PC-9 (cell line): ENCODE measurements at regions of chr6 and their contacts with region 1.

Region 1: DNA sequence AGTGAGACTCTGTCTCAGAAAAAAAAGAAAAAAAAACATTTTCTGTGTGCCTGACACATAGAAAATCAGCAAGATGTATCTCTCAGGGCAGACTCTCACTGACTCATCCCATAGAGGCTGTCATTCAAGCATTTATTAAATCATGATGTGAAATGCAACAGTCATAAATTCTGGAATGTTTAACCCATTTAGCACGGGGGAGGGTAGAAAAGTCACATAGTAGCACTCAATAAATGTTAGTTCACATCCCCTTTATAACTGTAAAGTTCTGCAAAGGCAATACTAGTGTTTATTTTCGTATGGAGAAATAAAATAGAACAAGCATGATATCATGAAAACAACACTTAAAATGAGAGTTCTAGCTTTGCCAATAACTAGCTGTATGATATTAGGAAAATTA is 15.5 kb upstream of the CARMIL1 start:
- DNase-seq: no peak
- H3K4me3 ChIP-seq: no peak overlapping the region
- H3K27ac ChIP-seq: no peak overlapping the region
- H3K4me1 ChIP-seq: no peaks in the 10 kb centered on the region
- H3K27me3 ChIP-seq: no peaks in the 10 kb centered on the region
- CTCF ChIP-seq: no peak

Region 2: GRCh38 chr6:25278914-25279747 is 15.5 kb after region 1 on chr6 and contains the start of gene CARMIL1:
- CTCF ChIA-PET with region 1: interaction called, 12 read pairs
- POLR2A ChIA-PET with region 1: interaction called, 5 read pairs
- intact Hi-C with region 1: no loop called
- DNase-seq: peak; percentile 78 to 94
- H3K4me3 ChIP-seq: peak within 1 kb of the TSS; percentile 96
- H3K27ac ChIP-seq: peak within 1 kb of the TSS; percentile 62
- H3K4me1 ChIP-seq: peaks cover 21% of the 10 kb centered on the region
- H3K27me3 ChIP-seq: no peaks in the 10 kb centered on the region
- CTCF ChIP-seq: peak; percentile 66
- total RNA-seq, gene CARMIL1: 25.7 and 33.1 TPM in 2 replicates

Region 3: DNA sequence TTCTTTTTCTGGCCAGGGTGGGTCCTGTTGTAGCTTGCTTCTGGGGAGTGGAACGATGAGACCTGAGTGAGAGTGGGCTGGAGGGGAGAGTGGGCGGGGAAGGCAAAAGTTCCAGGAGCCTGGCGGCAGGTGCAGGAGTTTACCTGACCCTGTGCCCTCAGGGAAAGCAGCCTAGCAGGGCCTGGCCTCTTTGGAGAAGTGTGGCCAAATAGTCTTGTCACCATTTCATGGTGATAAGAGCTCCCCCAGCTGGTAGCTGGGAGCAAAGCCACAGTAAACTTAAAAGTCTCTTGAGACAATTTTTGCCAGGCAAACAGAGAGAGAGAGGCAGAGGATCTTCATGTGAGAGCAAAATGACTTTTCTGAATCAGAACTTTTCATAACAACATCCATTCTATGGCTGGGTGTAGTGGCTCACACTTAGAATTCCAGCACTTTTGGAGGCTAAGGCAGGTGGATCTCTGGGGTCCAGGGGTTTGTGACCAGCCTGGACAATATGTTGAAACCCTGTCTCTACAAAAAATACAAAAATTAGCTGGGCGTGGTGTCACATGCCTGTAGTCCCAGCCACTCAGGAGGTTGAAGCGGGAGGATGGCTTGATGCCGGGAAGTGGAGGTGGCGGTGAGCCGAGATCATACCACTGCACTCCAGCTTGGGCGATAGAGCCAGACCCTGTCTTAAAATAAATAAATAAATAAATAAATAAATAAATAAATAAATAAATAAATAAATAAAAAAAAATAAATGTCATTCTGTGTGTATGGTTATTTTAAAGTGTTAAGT is 226.6 kb after region 1 on chr6:
- CTCF ChIA-PET with region 1: interaction called, 26 read pairs
- POLR2A ChIA-PET with region 1: no interaction called
- intact Hi-C with region 1: loop called (anchors 1 kb)
- DNase-seq: peak; percentile 68 to 73
- H3K4me3 ChIP-seq: no peak overlapping the region
- H3K27ac ChIP-seq: no peak overlapping the region
- H3K4me1 ChIP-seq: peaks cover 4% of the 10 kb centered on the region
- H3K27me3 ChIP-seq: no peaks in the 10 kb centered on the region
- CTCF ChIP-seq: peak; percentile 85

Region 4: GRCh38 chr6:25556516-25556915 is 292.9 kb after region 1 on chr6:
- CTCF ChIA-PET with region 1: interaction called, 5 read pairs
- POLR2A ChIA-PET with region 1: no interaction called
- intact Hi-C with region 1: loop called (anchors 1 kb)
- DNase-seq: peak in 1 of 2 experiments; percentile 70
- H3K4me3 ChIP-seq: no peak overlapping the region
- H3K27ac ChIP-seq: no peak overlapping the region
- H3K4me1 ChIP-seq: 0 out of 2 replicates have a peak, but pooled peaks cover 4% of the 10 kb centered on the region
- H3K27me3 ChIP-seq: no peaks in the 10 kb centered on the region
- CTCF ChIP-seq: peak; percentile 88

Region 5: DNA sequence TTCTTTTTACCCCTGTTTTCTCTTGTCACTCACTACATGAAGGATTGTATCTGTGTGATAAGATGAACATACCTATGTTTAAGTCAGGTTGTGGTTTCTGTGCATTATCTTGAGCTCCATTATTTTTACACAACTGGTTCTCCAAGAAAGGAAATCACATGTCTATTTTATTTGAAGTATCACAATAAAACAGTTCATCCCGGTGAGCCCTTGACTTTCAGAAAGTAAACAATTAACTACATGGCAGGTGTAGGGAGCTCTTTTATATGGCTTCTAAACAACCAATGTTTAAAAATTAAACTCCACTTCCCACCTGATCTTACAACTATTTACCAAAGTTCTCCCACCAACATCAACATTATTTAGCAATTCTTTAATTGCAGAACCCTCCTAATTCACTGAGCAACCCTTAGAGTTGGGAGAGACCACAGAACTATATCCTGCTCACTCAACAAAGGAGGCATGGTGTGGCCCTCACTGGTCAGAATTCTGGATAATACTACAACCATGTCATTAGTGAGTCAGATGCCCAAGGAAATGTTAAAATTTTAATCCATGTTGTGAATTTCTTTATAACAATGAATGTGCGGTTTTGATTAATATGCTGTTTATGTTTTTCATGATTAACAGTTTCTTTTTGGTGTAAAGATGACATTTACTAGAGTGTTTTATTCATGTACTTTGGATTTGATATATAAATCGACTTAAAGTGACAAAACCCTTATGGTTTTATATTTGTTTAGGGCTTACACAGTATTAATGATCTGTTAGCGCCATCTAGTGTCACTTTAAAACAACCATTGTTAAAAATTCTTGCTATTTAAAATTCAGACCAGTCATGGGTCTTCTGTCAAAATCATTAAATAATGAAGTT is 338.4 kb after region 1 on chr6:
- CTCF ChIA-PET with region 1: no interaction called
- POLR2A ChIA-PET with region 1: no interaction called
- intact Hi-C with region 1: loop called (anchors 5 kb)
- DNase-seq: peak in 1 of 2 experiments; percentile 43
- H3K4me3 ChIP-seq: no peak overlapping the region
- H3K27ac ChIP-seq: no peak overlapping the region
- H3K4me1 ChIP-seq: no peaks in the 10 kb centered on the region
- H3K27me3 ChIP-seq: no peaks in the 10 kb centered on the region
- CTCF ChIP-seq: peak; percentile 85

Region 6: DNA sequence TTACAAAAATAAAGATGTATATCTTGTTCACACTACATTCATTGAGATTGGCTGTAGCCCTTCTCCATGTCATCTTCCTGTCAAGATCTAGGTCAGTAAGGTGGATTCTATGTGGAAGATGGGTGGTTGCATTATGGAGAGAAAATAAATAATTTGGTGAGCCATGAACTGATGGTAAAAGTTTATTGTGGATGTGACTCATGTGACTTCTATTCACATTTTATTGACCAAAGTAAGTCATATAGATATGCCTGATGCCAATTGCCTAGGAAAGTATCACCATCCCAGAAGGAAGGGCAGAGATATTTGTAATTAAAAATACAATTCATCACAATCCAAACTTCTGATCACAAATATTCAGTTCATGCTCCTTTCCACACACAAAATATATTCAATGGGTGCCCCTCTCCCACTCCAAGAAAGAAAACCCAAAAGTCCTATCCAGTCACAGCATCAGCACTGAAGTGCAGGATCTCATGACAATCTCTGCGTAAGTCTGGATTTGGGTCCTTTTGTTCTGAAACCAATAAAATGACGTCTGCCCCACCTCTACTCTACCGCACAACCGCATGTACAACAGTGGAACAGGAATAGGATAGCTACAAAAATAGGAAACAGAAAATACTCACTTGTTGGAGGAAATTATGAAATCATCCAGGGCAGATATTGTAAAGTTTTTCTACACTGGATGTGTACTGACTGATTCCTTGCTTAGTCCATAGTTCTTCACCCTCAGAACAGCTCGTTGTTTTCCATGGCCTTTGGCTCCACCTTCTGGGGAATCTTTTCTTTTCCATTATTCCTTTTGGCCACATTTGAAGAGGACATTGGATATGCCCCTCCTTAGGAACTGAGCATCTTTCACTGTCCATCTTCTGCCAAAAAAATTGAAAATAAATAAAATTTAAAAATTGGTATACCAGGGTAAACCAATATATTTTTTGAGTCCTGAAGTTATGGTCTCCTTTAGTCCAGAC is 626.5 kb after region 1 on chr6:
- CTCF ChIA-PET with region 1: no interaction called
- POLR2A ChIA-PET with region 1: no interaction called
- intact Hi-C with region 1: loop called (anchors 1 kb)
- DNase-seq: peak; percentile 42
- H3K4me3 ChIP-seq: no peak overlapping the region
- H3K27ac ChIP-seq: no peak overlapping the region
- H3K4me1 ChIP-seq: no peaks in the 10 kb centered on the region
- H3K27me3 ChIP-seq: no peaks in the 10 kb centered on the region
- CTCF ChIP-seq: peak; percentile 72